ENCODE measurements at regions of chr1 and their contacts with region 1.

Region 1: GRCh38 chr1:206106328-206107167 is 10.6 kb downstream of the AVPR1B start:
- DNase-seq: peak; percentile 94

Region 2: DNA sequence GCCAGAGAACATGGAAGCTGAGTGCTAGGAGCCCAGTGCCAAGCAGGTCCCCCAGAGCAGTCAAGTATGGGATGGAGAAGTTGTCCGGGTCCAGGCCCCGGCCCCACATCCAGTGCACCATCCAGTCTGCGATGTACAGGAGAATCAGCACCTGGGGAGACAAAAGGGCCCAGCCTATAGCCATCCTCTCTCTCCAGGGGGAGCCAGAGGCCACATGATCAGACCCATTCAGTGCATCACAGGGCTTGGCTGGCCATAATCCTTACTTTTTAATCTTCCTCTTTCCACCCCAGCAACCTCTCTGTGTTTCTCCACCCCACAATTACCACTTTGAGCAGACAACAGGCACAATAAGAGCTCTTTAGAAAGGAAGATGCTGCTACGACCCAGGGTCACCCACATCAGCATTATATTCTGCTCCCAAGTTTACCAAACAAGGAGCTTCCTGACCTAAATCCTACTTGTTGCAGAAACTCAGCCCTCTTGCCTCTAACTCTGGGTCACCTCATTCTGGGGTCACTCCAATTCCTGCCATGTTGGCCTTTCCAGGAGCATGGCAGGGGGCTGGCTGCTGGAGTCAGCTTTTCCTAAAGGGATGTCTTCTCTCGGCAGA is 314.9 kb before region 1 on chr1:
- intact Hi-C with region 1: loop called in 1 of 2 experiments (anchors 10 kb)
- DNase-seq: no peak

Region 3: GRCh38 chr1:205986252-205986651 is 120.3 kb before region 1 on chr1:
- intact Hi-C with region 1: loop called (anchors 2 to 5 kb)
- DNase-seq: no peak